Activated CD8-positive, alpha-beta memory T cell treated with anti-CD3 and anti-CD28 coated beads, Interleukin-2, amount 10 ng/mL, durations not matched to agents 7 days and 5 days (primary cell): ENCODE measurements at regions of chr22 and their contacts with region 1.

Region 1: DNA sequence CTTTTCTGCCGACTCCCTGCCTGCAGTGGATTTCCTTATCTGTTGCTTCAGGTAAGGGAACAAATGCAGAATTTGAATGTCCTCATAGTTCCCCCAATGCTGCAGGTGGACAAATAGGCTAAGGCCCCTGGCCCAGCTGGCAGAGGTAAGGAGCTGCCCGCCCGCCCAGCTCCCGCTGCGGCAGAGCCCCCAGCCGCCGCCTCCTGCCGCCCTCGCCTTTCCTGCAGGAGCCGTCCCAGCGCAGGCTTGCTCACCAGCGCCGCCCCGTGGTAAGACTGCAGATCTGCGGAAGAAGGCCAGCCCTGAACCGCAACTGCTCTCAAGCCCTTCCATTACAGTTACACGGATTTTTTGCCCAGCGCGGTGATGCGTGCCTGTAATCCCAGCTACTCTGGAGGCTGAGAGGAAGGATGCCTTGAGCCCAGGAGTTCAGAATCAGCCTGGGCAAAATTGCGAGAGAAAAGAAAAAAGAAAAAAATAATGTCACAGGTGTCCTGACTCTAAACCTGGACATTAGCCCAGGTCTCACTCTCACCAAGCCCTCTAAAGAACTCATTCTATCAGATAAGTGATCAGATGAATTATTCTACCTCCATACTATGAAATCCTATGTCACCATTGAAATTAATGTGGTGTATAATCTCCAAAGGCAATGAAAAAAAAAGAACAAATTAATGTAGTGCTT is 51.2 kb upstream of the EMID1 start:
- DNase-seq: peak; percentile 84
- ATAC-seq: peak; percentile 91
- H3K4me3 Mint-ChIP-seq: peak overlapping the region; percentile 18
- H3K27ac Mint-ChIP-seq: no peak overlapping the region
- H3K4me1 Mint-ChIP-seq: peaks cover 21% of the 10 kb centered on the region
- H3K27me3 Mint-ChIP-seq: peaks cover 46% of the 10 kb centered on the region

Region 2: DNA sequence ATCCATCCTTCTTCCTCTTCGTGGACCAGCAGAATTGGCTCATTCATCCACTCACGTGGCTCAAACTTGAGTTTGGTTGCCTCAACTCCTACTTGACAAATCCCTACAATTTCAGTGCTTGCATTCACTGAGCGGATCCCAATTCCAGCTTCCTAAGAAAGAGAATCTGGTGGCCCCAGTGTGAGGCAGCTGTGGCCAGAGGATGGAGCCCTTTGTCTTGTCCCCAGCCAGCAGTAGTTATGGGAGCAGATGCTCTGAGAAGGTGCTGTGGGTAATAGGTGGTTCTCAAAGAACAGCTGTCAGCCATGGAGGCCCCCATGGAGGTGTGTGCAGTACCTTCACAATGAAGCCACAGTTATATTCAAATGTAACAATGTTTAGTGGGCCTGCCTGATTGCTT is 42.4 kb before region 1 on chr22:
- CTCF ChIA-PET with region 1: interaction called, 14 read pairs
- DNase-seq: peak; percentile 39
- ATAC-seq: no peak
- H3K4me3 Mint-ChIP-seq: no peak overlapping the region
- H3K27ac Mint-ChIP-seq: no peak overlapping the region
- H3K4me1 Mint-ChIP-seq: peaks cover 24% of the 10 kb centered on the region
- H3K27me3 Mint-ChIP-seq: peaks cover 42% of the 10 kb centered on the region

Region 3: GRCh38 chr22:29117799-29118477 is 36.6 kb before region 1 on chr22:
- CTCF ChIA-PET with region 1: interaction called, 14 read pairs
- DNase-seq: peak; percentile 29
- ATAC-seq: no peak
- H3K4me3 Mint-ChIP-seq: no peak overlapping the region
- H3K27ac Mint-ChIP-seq: no peak overlapping the region
- H3K4me1 Mint-ChIP-seq: peaks cover 54% of the 10 kb centered on the region
- H3K27me3 Mint-ChIP-seq: peaks cover 24% of the 10 kb centered on the region

Region 4: GRCh38 chr22:29143941-29144785 is 10.3 kb before region 1 on chr22:
- CTCF ChIA-PET with region 1: interaction called, 11 read pairs
- DNase-seq: peak; percentile 38
- ATAC-seq: no peak
- H3K4me3 Mint-ChIP-seq: no peak overlapping the region
- H3K27ac Mint-ChIP-seq: no peak overlapping the region
- H3K4me1 Mint-ChIP-seq: peaks cover 14% of the 10 kb centered on the region
- H3K27me3 Mint-ChIP-seq: peaks cover 27% of the 10 kb centered on the region